ENCODE measurements at regions of chr2 and their contacts with region 1.

Region 1: DNA sequence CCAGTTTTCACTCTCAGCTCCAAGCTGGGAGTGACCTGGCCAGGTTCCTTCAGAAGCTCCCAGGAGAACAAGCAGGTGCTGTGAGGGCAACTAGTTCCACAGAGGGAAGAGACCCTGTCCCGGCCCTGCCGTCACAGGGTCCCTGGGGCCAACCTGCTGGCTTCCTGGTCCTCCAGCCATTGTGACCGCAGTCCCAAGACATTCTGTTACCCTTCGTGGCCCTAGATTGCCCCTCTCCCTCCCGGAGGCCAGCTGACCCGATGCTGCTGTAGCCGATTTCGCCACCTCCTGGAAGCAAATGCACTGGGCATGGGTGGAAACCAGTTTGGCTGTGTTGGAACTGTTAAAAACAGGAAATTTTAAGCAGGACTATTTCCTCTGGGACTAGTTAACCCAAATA is 55.4 kb downstream of the EPAS1 start:
- DNase-seq: no peak
- ATAC-seq: no peak
- H3K4me3 Mint-ChIP-seq: peak overlapping the region in 9 of 10 donors; percentile 20 to 90 (median 84)
- H3K27ac Mint-ChIP-seq: peak overlapping the region; percentile 76 to 93 (median 88)
- H3K4me1 Mint-ChIP-seq: peaks cover 51 to 100% (median 89%) of the 10 kb centered on the region in 4 donors
- H3K27me3 Mint-ChIP-seq: no peaks in the 10 kb centered on the region

Region 2: DNA sequence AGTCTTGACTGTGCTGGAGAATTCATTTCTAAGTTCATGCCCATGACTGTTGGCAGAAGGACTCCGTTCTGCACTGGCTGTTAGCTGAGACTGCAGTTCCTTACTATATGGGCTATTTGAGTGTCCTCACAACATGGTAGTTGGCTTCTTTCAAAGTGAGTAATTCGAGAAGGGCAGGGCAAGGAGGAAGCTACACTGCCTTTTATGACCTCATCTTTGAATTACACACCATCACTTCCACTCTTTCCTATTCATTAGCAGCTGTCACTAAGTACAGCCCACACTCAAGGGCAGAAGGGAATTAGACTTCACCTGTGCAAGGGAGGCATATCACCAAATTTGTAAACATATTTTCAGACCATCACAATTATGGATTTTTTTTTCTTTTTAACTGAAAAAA is 111.3 kb before region 1 on chr2:
- POLR2A ChIA-PET with region 1: no interaction called
- DNase-seq: no peak
- ATAC-seq: no peak
- H3K4me3 Mint-ChIP-seq: no peak overlapping the region
- H3K27ac Mint-ChIP-seq: no peak overlapping the region
- H3K4me1 Mint-ChIP-seq: peaks cover 5 to 32% (median 23%) of the 10 kb centered on the region in 4 donors
- H3K27me3 Mint-ChIP-seq: no peaks in the 10 kb centered on the region

Region 3: DNA sequence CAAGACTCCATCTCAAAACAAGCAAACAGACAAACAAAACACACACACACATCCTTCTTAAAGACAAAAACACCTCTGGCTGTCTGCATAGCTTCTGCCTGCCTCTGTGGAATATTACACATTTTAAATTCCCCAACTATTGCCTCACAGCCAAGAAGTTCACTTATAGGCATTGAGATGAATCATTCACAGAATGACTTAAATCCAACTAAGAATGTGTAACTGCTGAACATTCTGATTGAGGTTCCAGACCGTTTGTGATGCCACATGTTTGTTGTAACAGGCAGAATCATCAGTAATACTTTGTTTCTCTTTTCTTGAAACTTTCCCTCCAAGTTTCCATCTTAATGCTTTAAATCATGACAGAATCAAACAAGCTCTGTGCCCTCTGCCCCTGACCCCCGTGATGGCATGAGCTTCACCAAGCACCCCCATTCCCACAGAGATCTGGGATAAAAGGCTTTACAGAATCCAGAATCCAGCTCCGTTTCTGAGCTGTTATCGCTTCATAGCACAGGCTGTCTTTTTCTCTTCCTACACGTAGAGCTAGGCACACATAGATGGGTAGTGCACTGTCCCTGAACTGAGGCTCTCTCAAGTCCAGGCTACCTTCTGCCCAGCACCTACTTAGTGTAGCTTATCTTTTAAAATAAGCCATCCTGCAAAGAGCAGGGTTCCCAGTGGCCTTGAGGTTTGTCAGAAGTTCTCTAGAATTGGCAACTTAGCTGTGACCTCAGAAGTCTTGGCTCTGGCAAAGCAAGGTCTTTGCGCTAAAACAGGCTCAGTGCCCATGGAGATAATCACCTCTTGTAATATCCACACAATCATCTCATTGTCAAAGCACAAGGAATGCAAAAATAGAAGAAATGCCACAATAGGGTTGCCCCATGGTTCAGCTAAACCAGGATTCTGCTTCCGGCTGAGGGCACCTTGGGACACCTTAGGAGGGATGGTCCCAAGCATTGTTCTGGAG is 22.5 kb before region 1 on chr2:
- POLR2A ChIA-PET with region 1: no interaction called
- DNase-seq: no peak
- ATAC-seq: no peak
- H3K4me3 Mint-ChIP-seq: no peak overlapping the region
- H3K27ac Mint-ChIP-seq: peak overlapping the region in 1 of 10 donors; percentile 36
- H3K4me1 Mint-ChIP-seq: peaks cover 9 to 16% (median 10%) of the 10 kb centered on the region in 4 donors
- H3K27me3 Mint-ChIP-seq: peaks cover 0 to 33% (median 12%) of the 10 kb centered on the region in 5 donors

Region 4: DNA sequence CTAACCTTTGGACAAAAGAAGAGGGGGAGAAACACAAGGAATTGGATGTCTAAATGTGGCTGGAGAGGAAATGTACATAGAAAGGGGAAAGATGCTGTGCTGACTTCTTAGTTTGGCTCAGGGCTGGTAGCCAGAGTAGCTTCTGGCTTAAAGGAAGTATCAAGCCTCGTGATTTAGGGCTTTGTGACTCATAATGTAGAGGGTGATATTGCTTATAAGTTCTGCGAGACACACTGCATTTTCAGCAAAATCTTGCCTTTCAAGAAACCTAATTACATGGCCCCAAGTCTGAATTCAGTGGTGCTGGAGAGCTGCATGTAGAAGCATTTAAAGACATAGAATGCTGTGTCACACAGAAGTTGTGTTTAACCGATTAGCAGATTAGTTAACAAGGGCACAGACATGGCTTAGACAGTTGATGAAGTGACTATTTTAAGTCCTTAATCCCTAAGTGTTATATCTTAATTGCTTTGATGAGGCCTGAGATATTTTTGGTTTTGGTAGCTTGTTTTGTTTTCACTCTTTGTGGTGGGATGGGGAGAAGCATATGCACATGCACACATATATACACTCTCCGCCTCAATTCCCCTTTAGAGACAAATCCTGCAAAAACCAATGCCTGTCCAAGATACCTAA is 11.0 kb after region 1 on chr2:
- POLR2A ChIA-PET with region 1: interaction called, 17 read pairs
- DNase-seq: no peak
- ATAC-seq: peak; percentile 44 to 72
- H3K4me3 Mint-ChIP-seq: peak overlapping the region in 4 of 10 donors; percentile 4 to 40 (median 24)
- H3K27ac Mint-ChIP-seq: peak overlapping the region in 1 of 10 donors; percentile 38
- H3K4me1 Mint-ChIP-seq: peaks cover 20 to 45% (median 37%) of the 10 kb centered on the region in 4 donors
- H3K27me3 Mint-ChIP-seq: peaks cover 0 to 2% (median 0%) of the 10 kb centered on the region in 5 donors